Activated CD4-positive, alpha-beta memory T cell treated with anti-CD3 and anti-CD28 coated beads for 36 hours (primary cell): ENCODE measurements at regions of chr6 and their contacts with region 1.

Region 1: GRCh38 chr6:16183187-16183664 is 54.3 kb downstream of the MYLIP start:
- DNase-seq: no peak
- H3K4me3 Mint-ChIP-seq: no peak overlapping the region
- H3K27ac Mint-ChIP-seq: no peak overlapping the region
- H3K4me1 Mint-ChIP-seq: peaks cover 20% of the 10 kb centered on the region
- H3K27me3 Mint-ChIP-seq: no peaks in the 10 kb centered on the region

Region 2: GRCh38 chr6:15893556-15894268 is 289.5 kb before region 1 on chr6:
- CTCF ChIA-PET with region 1: interaction called, 29 read pairs
- POLR2A ChIA-PET with region 1: no interaction called
- intact Hi-C with region 1: no loop called
- DNase-seq: no peak
- H3K4me3 Mint-ChIP-seq: no peak overlapping the region
- H3K27ac Mint-ChIP-seq: no peak overlapping the region
- H3K4me1 Mint-ChIP-seq: peaks cover 5% of the 10 kb centered on the region
- H3K27me3 Mint-ChIP-seq: peaks cover 9% of the 10 kb centered on the region

Region 3: DNA sequence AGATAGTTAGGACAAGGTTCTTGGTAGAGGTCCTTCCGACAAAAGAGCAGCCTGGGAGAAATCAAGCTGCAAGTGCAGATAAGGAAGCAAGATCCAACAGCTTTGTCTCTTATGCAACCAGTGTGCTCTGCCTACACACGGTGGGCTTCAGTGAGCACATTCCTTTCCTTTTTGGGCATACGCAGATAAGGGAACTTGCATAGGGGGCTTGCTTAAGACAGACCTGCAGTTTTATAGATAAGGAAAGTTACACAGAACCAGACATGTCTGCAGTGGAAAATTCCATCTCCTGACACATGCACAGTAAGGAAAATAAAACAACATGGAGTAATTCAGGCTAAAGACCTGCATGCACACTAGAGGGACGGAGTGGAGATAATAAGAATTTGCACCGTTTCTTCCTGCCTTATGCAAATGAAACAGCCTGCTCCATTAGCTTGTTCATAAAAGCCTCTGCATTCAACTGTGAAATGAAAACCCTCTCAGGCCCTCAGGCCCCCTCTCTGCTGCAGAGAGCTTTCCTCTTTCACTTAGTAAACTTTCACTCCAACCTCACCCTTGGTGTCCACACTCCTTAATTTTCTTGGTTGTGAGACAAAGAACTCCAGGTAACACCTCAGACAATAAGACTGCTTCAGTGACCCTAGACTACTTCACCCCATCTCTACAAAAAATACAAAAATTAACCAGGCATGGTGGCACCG is 151.8 kb before region 1 on chr6:
- CTCF ChIA-PET with region 1: no interaction called
- POLR2A ChIA-PET with region 1: no interaction called
- intact Hi-C with region 1: no loop called
- DNase-seq: no peak
- H3K4me3 Mint-ChIP-seq: no peak overlapping the region
- H3K27ac Mint-ChIP-seq: no peak overlapping the region
- H3K4me1 Mint-ChIP-seq: no peaks in the 10 kb centered on the region
- H3K27me3 Mint-ChIP-seq: peaks cover 7% of the 10 kb centered on the region

Region 4: GRCh38 chr6:16089232-16090062 is 93.8 kb before region 1 on chr6:
- CTCF ChIA-PET with region 1: interaction called, 13 read pairs
- POLR2A ChIA-PET with region 1: no interaction called
- intact Hi-C with region 1: no loop called
- DNase-seq: peak; percentile 40
- H3K4me3 Mint-ChIP-seq: no peak overlapping the region
- H3K27ac Mint-ChIP-seq: no peak overlapping the region
- H3K4me1 Mint-ChIP-seq: peaks cover 7% of the 10 kb centered on the region
- H3K27me3 Mint-ChIP-seq: peaks cover 13% of the 10 kb centered on the region

Region 5: DNA sequence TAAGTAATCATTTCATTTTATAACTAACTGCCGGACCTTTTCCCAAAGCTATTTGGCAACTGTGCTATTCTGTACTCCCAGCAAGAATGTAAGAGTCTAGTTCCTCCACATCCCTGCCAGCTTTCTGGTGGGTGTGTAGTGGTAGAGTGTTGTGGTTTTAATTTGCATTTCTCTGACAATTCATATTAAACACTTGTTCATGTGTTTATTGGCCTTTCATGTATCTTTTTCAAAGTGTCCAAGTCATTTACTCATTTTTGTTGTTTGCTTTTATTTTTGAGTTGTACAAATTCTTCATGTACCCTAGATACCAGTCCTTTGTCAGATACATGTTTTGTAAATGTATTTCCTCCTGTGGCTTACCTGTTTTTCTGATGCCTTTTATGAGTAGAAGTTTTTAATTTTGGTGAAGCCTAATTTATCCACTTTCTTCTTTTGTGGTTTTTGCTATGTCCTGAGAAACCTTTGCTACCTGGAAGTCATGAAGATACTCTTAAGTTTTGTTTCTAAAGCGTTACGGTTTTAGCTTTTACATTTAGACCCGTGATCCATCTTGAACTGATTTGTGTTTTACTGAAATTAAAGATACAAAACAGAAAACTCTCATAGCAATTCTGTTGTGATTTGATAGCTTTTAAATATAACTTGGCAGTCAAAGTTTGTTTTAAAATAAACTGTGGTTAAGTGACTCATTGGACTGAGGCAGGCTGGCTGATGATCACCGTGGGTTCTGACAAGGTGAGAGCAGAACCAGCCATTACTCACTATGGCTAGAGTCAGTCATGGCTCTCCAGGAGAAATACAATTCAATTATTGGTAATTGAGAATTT is 46.4 kb before region 1 on chr6:
- CTCF ChIA-PET with region 1: interaction called, 23 read pairs
- POLR2A ChIA-PET with region 1: interaction called, 11 read pairs
- intact Hi-C with region 1: loop called (anchors 2 kb)
- DNase-seq: peak; percentile 75
- H3K4me3 Mint-ChIP-seq: peak overlapping the region; percentile 46
- H3K27ac Mint-ChIP-seq: peak overlapping the region; percentile 86
- H3K4me1 Mint-ChIP-seq: peaks cover 76% of the 10 kb centered on the region
- H3K27me3 Mint-ChIP-seq: no peaks in the 10 kb centered on the region

Region 6: DNA sequence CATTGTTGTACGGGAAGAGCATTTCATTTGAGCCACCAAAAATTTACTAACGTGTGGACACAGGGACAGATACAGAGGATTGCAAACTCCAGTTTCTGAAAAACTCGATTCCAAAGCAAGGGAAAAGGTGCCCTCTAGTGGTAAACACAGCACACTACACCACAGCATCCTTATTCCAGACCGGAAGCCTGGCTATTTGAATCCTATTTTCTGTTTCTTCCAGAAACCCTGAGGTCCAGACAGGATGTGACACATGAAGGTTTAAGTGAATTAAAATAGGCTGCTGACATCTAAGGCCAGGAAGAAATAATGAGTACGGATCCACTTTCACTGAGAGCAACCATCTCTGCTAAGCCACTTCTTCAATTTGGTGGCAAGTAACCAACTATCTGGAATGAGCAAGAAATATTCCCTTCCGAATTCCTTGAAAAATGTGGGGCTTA is 23.4 kb after region 1 on chr6:
- CTCF ChIA-PET with region 1: interaction called, 40 read pairs
- POLR2A ChIA-PET with region 1: interaction called, 3 read pairs
- intact Hi-C with region 1: no loop called
- DNase-seq: peak; percentile 44
- H3K4me3 Mint-ChIP-seq: no peak overlapping the region
- H3K27ac Mint-ChIP-seq: no peak overlapping the region
- H3K4me1 Mint-ChIP-seq: peaks cover 2% of the 10 kb centered on the region
- H3K27me3 Mint-ChIP-seq: peaks cover 16% of the 10 kb centered on the region